Mammary epithelial cell (primary cell): ENCODE measurements at regions of chr13 and their contacts with region 1.

Region 1: DNA sequence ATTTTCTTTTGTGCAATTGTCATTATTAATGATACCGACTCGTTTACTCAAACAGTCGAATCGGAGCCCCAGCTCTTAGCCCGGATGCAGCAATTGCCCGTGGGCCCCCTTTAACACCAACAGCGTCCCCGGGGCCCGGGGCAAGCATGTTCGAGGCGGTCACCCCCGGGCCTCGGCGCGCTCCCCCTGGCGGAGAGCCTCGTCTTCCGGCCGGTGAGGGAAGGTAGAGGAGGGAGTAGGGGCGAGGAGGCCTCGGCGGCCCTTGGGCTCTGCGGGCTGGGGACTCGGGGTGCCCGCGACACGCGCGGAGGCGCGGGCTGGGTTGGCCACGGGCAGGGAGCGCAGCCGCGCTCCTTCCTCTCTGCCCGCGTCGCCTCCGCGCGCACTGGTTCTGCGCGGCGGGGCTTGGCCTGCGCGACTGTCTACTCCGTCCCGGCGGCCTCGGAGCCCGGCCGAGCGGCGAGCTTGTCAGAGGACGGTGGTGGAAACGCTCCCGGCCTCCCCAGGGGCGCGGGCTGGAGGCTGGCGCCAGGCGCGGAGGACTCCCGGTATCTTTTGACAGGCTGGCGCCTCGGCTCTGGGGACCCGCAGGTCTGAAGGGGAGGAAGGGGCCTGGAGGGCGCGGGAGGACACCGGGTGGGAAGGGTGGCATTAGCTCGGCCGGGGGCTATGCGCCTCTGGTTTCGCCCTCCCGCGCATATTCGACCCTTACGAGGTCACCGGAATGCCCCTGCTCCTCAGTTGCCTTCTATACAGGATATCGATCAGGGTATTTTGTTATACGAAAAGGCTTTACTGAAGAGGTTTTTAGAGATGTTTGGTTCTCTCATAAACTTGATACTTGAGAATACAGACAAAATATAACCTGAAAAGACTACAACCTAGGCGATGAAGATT is 1.5 kb downstream of the BIVM start:
- DNase-seq: peak; percentile 79
- H3K4me3 ChIP-seq: peak overlapping the region; percentile 83 to 98 (median 90)
- H3K27ac ChIP-seq: peak overlapping the region; percentile 41
- H3K4me1 ChIP-seq: peaks cover 20% of the 10 kb centered on the region
- H3K27me3 ChIP-seq: peaks cover 2% of the 10 kb centered on the region
- CTCF ChIP-seq: peak; percentile 50 to 78

Region 2: GRCh38 chr13:102580552-102581169 is 219.7 kb before region 1 on chr13:
- CTCF ChIA-PET with region 1: no interaction called
- dilution Hi-C with region 1: no loop called
- in situ Hi-C with region 1: no loop called
- intact Hi-C with region 1: loop called (anchors 1 kb)
- DNase-seq: peak; percentile 51
- H3K4me3 ChIP-seq: no peak overlapping the region
- H3K27ac ChIP-seq: no peak overlapping the region
- H3K4me1 ChIP-seq: no peaks in the 10 kb centered on the region
- H3K27me3 ChIP-seq: no peaks in the 10 kb centered on the region
- CTCF ChIP-seq: peak; percentile 74 to 76

Region 3: DNA sequence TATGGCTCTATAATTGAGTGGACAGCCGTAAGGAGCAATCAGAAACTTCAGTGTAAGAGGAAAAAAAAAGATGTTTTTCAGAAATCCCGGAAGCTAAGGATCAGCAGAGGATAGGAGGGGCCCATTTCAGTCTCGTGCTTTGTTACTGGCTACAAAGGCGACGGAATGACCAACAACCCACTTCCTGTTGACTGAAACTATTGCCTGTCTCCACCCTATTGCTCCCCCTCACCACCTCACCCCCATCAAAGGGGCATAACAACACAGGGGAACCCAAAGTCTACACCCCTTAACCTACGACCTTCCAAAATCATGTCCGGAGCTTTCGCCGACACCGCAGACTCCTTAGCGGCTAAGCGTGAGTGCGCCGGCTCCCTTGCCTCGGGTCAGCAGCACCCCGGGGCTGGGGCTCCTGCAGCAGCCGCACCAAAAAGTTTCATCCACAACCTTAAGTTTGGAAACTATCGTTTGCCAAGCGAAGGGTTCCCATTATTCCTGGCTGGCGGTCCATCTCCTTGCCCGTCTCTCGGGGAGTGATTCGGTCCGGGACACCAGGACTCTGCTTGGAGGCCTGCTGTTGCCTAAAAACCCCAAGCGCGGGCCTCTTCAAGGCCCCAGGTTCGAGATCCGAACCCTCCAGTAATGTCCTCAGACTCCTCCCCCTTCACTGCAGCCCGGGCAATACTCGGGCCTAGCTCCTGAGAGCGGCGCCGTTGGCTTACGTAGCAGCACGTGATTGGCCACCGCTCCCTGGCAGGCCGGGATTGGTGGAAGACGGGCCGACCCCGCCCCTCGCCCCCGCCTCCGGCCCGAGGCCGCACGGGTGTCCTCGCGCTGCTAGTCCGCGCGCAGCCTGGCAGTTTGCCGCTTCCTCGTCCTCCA is 204.0 kb before region 1 on chr13 and contains the start of gene TPP2:
- CTCF ChIA-PET with region 1: no interaction called
- dilution Hi-C with region 1: no loop called
- in situ Hi-C with region 1: no loop called
- intact Hi-C with region 1: loop called (anchors 1 kb)
- DNase-seq: peak; percentile 98
- H3K4me3 ChIP-seq: peak within 1 kb of the TSS; percentile 81 to 97 (median 91)
- H3K27ac ChIP-seq: peak within 1 kb of the TSS; percentile 94
- H3K4me1 ChIP-seq: peaks cover 24% of the 10 kb centered on the region
- H3K27me3 ChIP-seq: no peaks in the 10 kb centered on the region
- CTCF ChIP-seq: no peak
- total RNA-seq, gene TPP2: 42.8 to 46.5 TPM

Region 4: GRCh38 chr13:102773441-102774215 is 26.8 kb before region 1 on chr13 and contains the start of gene TEX30:
- CTCF ChIA-PET with region 1: no interaction called
- dilution Hi-C with region 1: no loop called
- in situ Hi-C with region 1: no loop called
- intact Hi-C with region 1: loop called (anchors 1 kb)
- DNase-seq: peak; percentile 86
- H3K4me3 ChIP-seq: peak within 1 kb of the TSS; percentile 75 to 92 (median 83)
- H3K27ac ChIP-seq: peak within 1 kb of the TSS; percentile 54
- H3K4me1 ChIP-seq: peaks cover 6% of the 10 kb centered on the region
- H3K27me3 ChIP-seq: no peaks in the 10 kb centered on the region
- CTCF ChIP-seq: no peak
- total RNA-seq, gene TEX30: 10.5 to 14.2 TPM

Region 5: DNA sequence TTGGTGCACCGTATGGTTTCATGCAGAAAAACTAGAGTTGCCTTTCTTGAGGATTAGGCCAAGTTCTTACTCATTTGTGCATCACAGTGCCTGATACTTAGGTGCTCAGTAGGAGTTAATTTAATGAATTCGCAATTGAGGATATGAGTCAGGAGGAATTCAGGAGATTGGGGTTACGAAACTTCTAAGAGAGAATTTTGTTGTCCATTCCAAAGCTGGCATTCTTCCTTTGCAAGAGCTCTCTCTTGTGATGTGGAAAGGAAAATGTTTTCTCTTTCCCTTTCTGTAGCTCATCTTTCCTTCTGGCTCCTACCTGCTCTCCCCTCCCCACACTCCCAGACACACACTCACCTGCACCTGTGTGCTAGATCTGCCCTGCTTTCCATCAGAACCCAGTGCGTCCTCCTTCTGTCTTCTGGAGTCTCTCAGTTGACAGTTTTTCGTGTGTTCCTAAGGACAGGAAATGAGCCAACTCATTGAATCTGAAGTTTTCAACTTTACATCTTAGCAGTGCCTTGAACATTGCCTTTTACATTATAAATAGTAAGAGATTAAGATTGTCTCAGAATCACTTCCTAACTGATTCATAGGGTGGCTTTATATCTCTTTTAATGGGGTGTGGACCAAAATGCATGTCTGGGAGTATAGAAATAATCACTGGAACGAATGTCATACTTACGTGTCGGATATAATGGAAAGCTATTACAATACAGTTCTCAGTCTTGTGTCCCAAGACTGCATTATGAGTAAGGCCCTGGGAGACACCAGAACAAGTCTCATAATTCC is 25.7 kb after region 1 on chr13:
- CTCF ChIA-PET with region 1: interaction called, 4 read pairs
- dilution Hi-C with region 1: no loop called
- in situ Hi-C with region 1: no loop called
- intact Hi-C with region 1: loop called (anchors 1 kb)
- DNase-seq: peak; percentile 88
- H3K4me3 ChIP-seq: peak overlapping the region; percentile 21 to 46 (median 40)
- H3K27ac ChIP-seq: peak overlapping the region; percentile 59
- H3K4me1 ChIP-seq: peaks cover 20% of the 10 kb centered on the region
- H3K27me3 ChIP-seq: no peaks in the 10 kb centered on the region
- CTCF ChIP-seq: peak; percentile 3 to 28

Region 6: GRCh38 chr13:103430368-103430767 is 630.0 kb after region 1 on chr13:
- CTCF ChIA-PET with region 1: no interaction called
- dilution Hi-C with region 1: no loop called
- in situ Hi-C with region 1: no loop called
- intact Hi-C with region 1: no loop called
- DNase-seq: no peak
- H3K4me3 ChIP-seq: no peak overlapping the region
- H3K27ac ChIP-seq: no peak overlapping the region
- H3K4me1 ChIP-seq: no peaks in the 10 kb centered on the region
- H3K27me3 ChIP-seq: no peaks in the 10 kb centered on the region
- CTCF ChIP-seq: no peak